Mammary epithelial cell (primary cell): ENCODE measurements at regions of chrX and their contacts with region 1.

Region 1: GRCh38 chrX:119417844-119418243 is 18.7 kb downstream of the SLC25A43 start:
- DNase-seq: no peak
- H3K4me3 ChIP-seq: no peak overlapping the region
- H3K27ac ChIP-seq: no peak overlapping the region
- H3K4me1 ChIP-seq: no peaks in the 10 kb centered on the region
- H3K27me3 ChIP-seq: no peaks in the 10 kb centered on the region
- CTCF ChIP-seq: peak in 1 of 2 donors; percentile 25

Region 2: GRCh38 chrX:119442286-119442685 is 24.4 kb after region 1 on chrX:
- CTCF ChIA-PET with region 1: interaction called, 14 read pairs
- dilution Hi-C with region 1: no loop called
- in situ Hi-C with region 1: no loop called
- intact Hi-C with region 1: no loop called
- DNase-seq: no peak
- H3K4me3 ChIP-seq: no peak overlapping the region
- H3K27ac ChIP-seq: no peak overlapping the region
- H3K4me1 ChIP-seq: no peaks in the 10 kb centered on the region
- H3K27me3 ChIP-seq: no peaks in the 10 kb centered on the region
- CTCF ChIP-seq: no peak